MCF 10A (cell line): ENCODE measurements at regions of chr4 and their contacts with region 1.

Region 1: DNA sequence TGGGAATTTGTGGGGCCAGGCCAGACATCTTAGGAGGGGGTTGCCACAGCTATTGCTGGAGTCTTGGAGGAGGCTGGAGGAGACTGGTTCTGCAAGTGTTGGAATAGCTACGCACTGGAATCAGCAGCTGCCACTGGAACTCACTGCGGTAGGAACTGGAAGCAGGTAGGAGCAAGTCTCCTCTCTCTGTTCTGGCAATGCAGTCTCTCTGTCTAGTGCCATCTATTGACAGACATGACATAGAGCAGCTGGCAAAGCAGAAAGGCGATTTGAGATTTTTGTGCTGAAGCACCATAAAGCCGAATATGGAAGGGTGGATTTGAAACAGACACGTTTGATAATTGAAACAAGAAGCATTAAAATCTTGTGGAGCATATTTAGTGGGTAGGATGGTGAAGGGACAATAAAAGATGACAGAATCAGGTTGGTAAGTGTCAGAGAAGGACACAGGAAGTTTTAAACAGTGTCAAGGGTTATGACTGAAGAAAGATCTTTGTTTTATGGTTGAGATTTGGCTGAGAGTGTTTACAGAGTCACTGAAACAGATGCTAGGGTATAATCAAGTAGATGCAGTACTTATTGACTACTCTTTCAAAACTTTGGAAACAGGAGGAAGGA is 23.5 kb upstream of the SYNPO2 start:
- DNase-seq: peak; percentile 73
- H3K4me3 Mint-ChIP-seq: no peak overlapping the region
- H3K27ac Mint-ChIP-seq: no peak overlapping the region
- H3K4me1 Mint-ChIP-seq: no peaks in the 10 kb centered on the region
- H3K27me3 Mint-ChIP-seq: no peaks in the 10 kb centered on the region
- CTCF ChIP-seq: peak; percentile 67

Region 2: GRCh38 chr4:118278473-118279274 is 586.5 kb before region 1 on chr4:
- CTCF ChIA-PET with region 1: no interaction called
- POLR2A ChIA-PET with region 1: no interaction called
- intact Hi-C with region 1: no loop called
- DNase-seq: peak; percentile 98
- H3K4me3 Mint-ChIP-seq: peak overlapping the region; percentile 81
- H3K27ac Mint-ChIP-seq: peak overlapping the region; percentile 99
- H3K4me1 Mint-ChIP-seq: peaks cover 25% of the 10 kb centered on the region
- H3K27me3 Mint-ChIP-seq: no peaks in the 10 kb centered on the region
- CTCF ChIP-seq: no peak

Region 3: GRCh38 chr4:118586357-118586790 is 278.8 kb before region 1 on chr4:
- CTCF ChIA-PET with region 1: no interaction called
- POLR2A ChIA-PET with region 1: no interaction called
- intact Hi-C with region 1: no loop called
- DNase-seq: no peak
- H3K4me3 Mint-ChIP-seq: no peak overlapping the region
- H3K27ac Mint-ChIP-seq: no peak overlapping the region
- H3K4me1 Mint-ChIP-seq: no peaks in the 10 kb centered on the region
- H3K27me3 Mint-ChIP-seq: no peaks in the 10 kb centered on the region
- CTCF ChIP-seq: no peak

Region 4: GRCh38 chr4:118740869-118741268 is 124.3 kb before region 1 on chr4:
- CTCF ChIA-PET with region 1: interaction called, 16 read pairs
- POLR2A ChIA-PET with region 1: no interaction called
- intact Hi-C with region 1: no loop called
- DNase-seq: peak; percentile 23
- H3K4me3 Mint-ChIP-seq: no peak overlapping the region
- H3K27ac Mint-ChIP-seq: no peak overlapping the region
- H3K4me1 Mint-ChIP-seq: no peaks in the 10 kb centered on the region
- H3K27me3 Mint-ChIP-seq: no peaks in the 10 kb centered on the region
- CTCF ChIP-seq: peak; percentile 19

Region 5: DNA sequence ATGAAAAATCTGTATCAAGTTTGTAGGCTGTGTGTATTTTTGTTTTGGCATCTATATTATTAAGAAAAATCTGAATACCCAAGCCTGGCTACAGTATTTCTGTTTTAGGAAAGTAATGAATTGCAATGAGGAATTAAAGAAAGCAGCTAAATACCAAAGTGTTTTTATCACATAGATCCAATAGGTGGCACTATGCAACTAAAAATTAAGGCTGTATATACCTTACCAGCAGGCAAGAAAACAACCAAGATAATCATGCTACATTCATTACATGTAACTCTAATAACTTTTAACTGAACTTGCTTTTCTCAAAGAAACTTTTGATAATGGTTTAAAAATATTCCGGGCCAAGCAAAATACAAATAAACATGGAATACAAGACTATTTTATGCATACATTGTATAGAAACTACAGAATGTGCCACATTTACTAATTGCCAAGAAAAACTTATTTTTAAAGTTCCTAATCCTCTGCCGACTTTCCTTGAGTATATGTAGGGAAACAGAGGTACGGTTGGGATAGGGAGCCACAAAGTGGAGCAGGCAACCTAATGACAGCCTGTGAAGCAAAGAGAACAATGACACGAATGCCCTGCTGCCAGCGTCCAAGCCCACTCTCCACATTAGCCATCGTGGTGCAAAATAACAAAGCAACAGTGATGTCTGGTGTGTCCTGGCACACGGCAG is 93.0 kb before region 1 on chr4:
- CTCF ChIA-PET with region 1: interaction called, 81 read pairs
- POLR2A ChIA-PET with region 1: interaction called, 7 read pairs
- intact Hi-C with region 1: loop called (anchors 2 kb)
- DNase-seq: peak; percentile 56
- H3K4me3 Mint-ChIP-seq: no peak overlapping the region
- H3K27ac Mint-ChIP-seq: no peak overlapping the region
- H3K4me1 Mint-ChIP-seq: peaks cover 27% of the 10 kb centered on the region
- H3K27me3 Mint-ChIP-seq: no peaks in the 10 kb centered on the region
- CTCF ChIP-seq: peak; percentile 39

Region 6: DNA sequence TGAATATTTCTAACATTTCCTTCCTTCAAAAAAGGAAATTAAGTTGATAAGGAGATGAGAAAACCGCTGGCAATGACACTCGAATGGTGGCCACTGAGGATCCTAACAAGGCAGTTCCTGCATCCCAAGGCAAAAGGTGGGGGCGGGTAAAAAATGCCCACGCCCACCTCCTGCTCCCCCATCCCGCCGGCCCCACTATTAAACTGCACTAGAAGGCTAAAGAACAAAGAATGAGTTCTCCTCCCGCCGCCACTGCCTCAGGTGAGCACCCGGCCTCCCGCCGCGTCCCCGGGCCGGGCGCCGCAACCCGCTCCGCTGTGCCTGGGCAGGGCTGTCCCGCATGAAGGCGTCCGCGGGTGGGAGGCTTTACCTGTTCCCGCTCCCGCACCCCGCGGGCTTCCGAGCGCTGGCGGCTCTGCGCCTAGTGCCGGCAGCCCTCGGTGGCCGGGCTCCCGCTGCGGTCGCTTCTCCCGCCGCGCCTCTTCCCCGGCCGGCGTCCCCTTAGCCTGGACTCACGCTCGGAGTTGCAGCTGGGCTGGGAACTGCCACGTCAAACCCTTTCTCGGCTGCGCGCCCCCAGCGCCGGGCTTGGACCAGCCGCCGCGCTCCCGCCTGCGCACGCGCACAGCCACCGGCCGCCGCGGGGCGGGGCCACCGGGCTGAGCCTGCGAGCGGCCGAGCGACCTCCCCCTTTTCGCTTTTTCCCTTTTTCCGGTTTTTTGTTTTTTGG is 29.5 kb before region 1 on chr4 and contains the start of gene SEC24D:
- CTCF ChIA-PET with region 1: interaction called, 57 read pairs
- POLR2A ChIA-PET with region 1: interaction called, 20 read pairs
- intact Hi-C with region 1: no loop called
- DNase-seq: peak; percentile 84
- H3K4me3 Mint-ChIP-seq: peak within 1 kb of the TSS; percentile 95
- H3K27ac Mint-ChIP-seq: peak within 1 kb of the TSS; percentile 96
- H3K4me1 Mint-ChIP-seq: peaks cover 17% of the 10 kb centered on the region
- H3K27me3 Mint-ChIP-seq: no peaks in the 10 kb centered on the region
- CTCF ChIP-seq: no peak
- total RNA-seq, gene SEC24D: 117 and 134 TPM in 2 replicates

Region 7: DNA sequence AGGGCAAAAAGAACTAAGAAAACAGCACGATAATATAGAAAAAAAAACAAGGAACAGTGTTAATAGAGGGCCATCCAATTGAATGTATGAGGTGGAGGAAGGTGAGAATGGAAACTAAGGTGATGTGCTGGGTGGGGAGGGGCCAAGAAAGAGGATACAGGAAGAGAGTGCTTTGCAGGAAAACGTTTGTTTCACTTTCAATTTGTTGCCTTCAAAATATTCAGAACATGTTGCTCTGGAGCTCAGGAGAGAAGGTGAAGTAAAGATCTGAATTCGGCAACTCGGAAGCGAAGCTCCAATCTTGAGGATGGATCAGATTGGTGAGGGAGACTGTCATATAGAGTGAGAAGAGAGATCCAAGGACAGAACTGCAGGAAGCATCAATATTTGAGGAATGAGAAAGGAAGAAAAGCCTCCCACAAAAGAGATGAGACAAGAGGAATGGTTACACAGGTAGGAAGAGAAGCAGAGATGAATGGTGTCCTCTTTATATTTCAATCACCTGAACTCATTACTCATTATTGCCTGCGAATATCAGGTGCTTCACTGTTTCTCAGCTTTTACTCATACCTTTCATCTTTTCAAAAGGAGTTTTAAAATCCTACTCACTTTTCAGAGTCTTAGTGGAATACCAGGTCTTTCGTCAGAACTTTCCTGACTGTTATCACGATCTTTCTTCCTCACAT is 14.6 kb before region 1 on chr4:
- CTCF ChIA-PET with region 1: interaction called, 58 read pairs
- POLR2A ChIA-PET with region 1: interaction called, 6 read pairs
- intact Hi-C with region 1: no loop called
- DNase-seq: peak; percentile 25
- H3K4me3 Mint-ChIP-seq: peak overlapping the region; percentile 75
- H3K27ac Mint-ChIP-seq: peak overlapping the region; percentile 65
- H3K4me1 Mint-ChIP-seq: peaks cover 9% of the 10 kb centered on the region
- H3K27me3 Mint-ChIP-seq: no peaks in the 10 kb centered on the region
- CTCF ChIP-seq: no peak

Region 8: DNA sequence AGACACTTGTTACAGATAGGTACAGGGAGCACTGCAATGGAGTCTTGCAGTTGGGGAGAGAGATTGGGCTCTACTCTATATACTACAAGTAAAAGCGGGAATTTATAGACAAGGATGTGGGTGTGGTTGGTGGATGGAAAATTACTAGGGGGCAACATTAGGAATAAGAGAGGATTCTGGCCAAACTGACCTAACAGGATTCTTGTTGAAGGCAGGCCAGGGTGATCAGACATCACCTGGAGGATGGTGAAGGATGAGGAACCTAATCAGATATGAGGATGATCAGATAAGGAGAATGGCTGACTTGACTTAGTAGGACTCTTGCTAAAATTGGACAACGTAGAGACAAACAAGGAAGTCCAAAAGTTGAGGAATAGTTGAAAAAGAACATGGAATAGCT is 355.6 kb after region 1 on chr4:
- CTCF ChIA-PET with region 1: no interaction called
- POLR2A ChIA-PET with region 1: no interaction called
- intact Hi-C with region 1: no loop called
- DNase-seq: no peak
- H3K4me3 Mint-ChIP-seq: no peak overlapping the region
- H3K27ac Mint-ChIP-seq: no peak overlapping the region
- H3K4me1 Mint-ChIP-seq: peaks cover 26% of the 10 kb centered on the region
- H3K27me3 Mint-ChIP-seq: no peaks in the 10 kb centered on the region
- CTCF ChIP-seq: no peak